IMR-90 (cell line): ENCODE measurements at regions of chr12 and their contacts with region 1.

Region 1: DNA sequence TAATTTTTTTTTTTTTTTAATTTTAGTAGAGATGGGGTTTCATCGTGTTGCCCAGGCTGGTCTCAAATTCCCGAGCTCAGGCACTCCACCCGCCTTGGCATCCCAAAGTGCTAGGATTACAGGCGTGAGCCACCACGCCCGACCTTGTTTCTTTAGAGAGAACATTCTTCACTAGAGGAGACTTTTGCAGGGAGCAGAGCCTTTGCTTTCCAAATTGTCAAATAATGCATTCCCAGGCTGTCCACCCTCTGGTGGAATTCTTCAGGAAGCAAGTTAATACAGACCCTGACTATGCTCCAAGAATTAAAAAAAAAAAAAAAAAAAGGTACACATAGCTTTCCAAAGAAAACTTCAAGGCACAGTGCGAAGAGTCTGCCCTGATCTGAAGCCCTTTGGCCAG is 6.8 kb downstream of the ALDH1L2 start:
- DNase-seq: no peak
- ATAC-seq: no peak
- H3K4me3 ChIP-seq: no peak overlapping the region
- H3K27ac ChIP-seq: no peak overlapping the region
- H3K4me1 ChIP-seq: peaks cover 3% of the 10 kb centered on the region
- H3K27me3 ChIP-seq: no peaks in the 10 kb centered on the region
- CTCF ChIP-seq: no peak
- POLR2A ChIP-seq: no peak
- RAD21 ChIP-seq: no peak

Region 2: DNA sequence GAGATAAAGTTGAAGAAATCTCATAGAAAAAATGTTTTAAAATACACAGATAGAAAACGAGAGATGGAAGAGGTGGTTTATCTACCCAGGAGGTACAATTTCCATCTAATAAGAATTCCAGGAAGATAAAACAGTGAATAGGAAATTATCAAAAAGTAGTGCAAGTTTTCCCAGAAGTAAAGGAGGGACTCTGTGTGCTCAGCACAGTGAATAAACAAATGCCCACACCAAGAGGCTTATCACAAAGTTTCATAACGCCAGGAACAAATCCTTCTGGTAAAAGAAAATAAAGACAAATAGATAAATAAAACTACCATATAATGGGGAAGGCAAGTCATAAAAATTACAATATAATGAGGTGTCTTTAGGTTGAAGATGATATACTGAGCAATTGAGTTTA is 298.3 kb before region 1 on chr12:
- CTCF ChIA-PET with region 1: no interaction called
- POLR2A ChIA-PET with region 1: no interaction called
- dilution Hi-C with region 1: no loop called
- in situ Hi-C with region 1: no loop called
- intact Hi-C with region 1: no loop called
- DNase-seq: no peak
- ATAC-seq: no peak
- H3K4me3 ChIP-seq: no peak overlapping the region
- H3K27ac ChIP-seq: no peak overlapping the region
- H3K4me1 ChIP-seq: no peaks in the 10 kb centered on the region
- H3K27me3 ChIP-seq: peaks cover 12% of the 10 kb centered on the region
- CTCF ChIP-seq: no peak
- POLR2A ChIP-seq: no peak
- RAD21 ChIP-seq: no peak

Region 3: GRCh38 chr12:105538880-105539279 is 461.4 kb after region 1 on chr12:
- CTCF ChIA-PET with region 1: no interaction called
- POLR2A ChIA-PET with region 1: interaction called, 10 read pairs
- dilution Hi-C with region 1: no loop called
- in situ Hi-C with region 1: no loop called
- intact Hi-C with region 1: no loop called
- DNase-seq: peak; percentile 86
- ATAC-seq: peak; percentile 92
- H3K4me3 ChIP-seq: no peak overlapping the region
- H3K27ac ChIP-seq: peak overlapping the region; percentile 38; the same call in 1 of the 2 replicates
- H3K4me1 ChIP-seq: peaks cover 12% of the 10 kb centered on the region
- H3K27me3 ChIP-seq: peaks cover 4% of the 10 kb centered on the region; the same call in 1 of the 2 replicates
- CTCF ChIP-seq: no peak
- POLR2A ChIP-seq: no peak
- RAD21 ChIP-seq: no peak; the same call in 1 of the 2 replicates